CD8-positive, alpha-beta T cell (primary cell): ENCODE measurements at regions of chr6 and their contacts with region 1.

Region 1: DNA sequence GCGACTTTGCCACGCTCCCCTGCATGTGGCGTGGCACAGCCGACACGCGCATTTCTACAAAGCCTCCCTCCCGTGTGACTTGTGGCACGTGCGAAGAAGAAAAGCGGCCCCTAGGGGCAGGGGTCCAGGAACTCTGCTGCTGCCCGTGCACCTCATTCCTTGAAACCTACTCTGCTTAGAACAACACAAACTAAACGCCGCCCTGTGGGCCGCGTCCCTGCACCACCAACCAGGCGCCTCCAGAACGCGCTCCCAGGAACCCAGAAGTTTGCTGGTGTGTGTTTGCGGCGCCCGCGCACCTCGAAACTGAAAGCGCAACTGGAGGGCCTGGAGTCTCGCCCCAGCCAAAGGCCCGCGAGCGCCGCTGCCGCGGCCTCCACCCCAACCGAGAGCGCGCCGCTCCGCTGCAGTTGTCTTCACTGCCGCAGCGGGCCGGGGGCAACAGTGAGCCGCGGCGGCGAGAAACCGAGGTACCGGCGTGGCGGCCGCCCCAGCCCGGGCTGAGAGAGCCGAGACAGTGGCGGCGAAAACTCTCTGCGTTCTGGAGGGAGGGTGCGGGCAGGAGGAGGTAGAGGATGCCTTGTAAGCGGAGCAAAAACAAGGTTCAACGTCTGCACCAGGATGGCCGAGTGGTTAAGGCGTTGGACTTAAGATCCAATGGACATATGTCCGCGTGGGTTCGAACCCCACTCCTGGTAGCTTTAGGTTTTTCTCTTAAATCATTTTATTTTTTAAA is 65.8 kb downstream of the STX11 start:
- DNase-seq: peak; percentile 85 to 97 (median 92)
- ATAC-seq: peak; percentile 85
- H3K4me3 ChIP-seq: peak overlapping the region; percentile 70 to 71
- H3K4me3 Mint-ChIP-seq: peak overlapping the region; percentile 95
- H3K27ac ChIP-seq: peak overlapping the region; percentile 82 to 86
- H3K27ac Mint-ChIP-seq: peak overlapping the region; percentile 100
- H3K4me1 ChIP-seq: peaks cover 27% of the 10 kb centered on the region
- H3K4me1 Mint-ChIP-seq: peaks cover 36% of the 10 kb centered on the region
- H3K27me3 ChIP-seq: no peaks in the 10 kb centered on the region
- H3K27me3 Mint-ChIP-seq: peaks cover 2% of the 10 kb centered on the region
- CTCF ChIP-seq: peak; percentile 64

Region 2: GRCh38 chr6:143450453-143451371 is 765.4 kb before region 1 on chr6 and contains the starts of genes ADAT2 and PEX3:
- CTCF ChIA-PET with region 1: no interaction called
- POLR2A ChIA-PET with region 1: no interaction called
- intact Hi-C with region 1: loop called in 1 of 2 experiments (anchors 5 kb)
- DNase-seq: peak; percentile 82 to 95 (median 92)
- ATAC-seq: peak; percentile 90
- H3K4me3 ChIP-seq: peak within 1 kb of the TSS; percentile 64 to 86
- H3K4me3 Mint-ChIP-seq: peak within 1 kb of the TSS; percentile 100
- H3K27ac ChIP-seq: peak within 1 kb of the TSS; percentile 68 to 74
- H3K27ac Mint-ChIP-seq: peak within 1 kb of the TSS; percentile 96
- H3K4me1 ChIP-seq: peaks cover 21% of the 10 kb centered on the region
- H3K4me1 Mint-ChIP-seq: peaks cover 57% of the 10 kb centered on the region
- H3K27me3 ChIP-seq: no peaks in the 10 kb centered on the region
- H3K27me3 Mint-ChIP-seq: no peaks in the 10 kb centered on the region
- CTCF ChIP-seq: no peak
- total RNA-seq, gene ADAT2: 18.8 to 19.9 TPM
- total RNA-seq, gene PEX3: 10.5 to 11.6 TPM

Region 3: DNA sequence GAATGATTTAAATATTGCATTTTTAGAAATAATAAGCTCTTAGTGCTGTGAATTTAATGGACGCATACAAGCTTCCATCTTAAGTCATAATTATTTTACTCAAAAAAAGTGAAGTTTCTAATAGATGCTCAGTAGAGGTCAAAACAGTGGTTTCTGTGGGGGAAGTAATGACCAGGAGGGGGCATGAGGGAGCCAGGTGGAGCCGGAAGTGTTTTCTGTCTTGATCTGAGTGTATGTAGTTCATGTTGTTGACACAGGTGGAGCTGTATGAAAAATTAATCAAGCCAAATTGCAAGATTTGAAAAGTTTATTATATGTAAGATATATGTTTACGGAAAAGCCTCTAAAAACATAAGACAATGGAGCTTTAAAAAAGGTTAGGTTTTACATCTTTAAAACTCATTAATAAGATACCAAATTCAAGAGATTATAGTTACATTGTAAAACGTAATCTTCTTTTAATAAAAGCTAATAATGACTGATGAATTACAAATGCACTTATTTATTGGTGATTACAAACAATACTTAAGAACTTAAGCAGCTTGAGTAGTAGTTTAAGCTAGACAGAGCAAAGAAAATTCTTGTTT is 276.0 kb before region 1 on chr6:
- CTCF ChIA-PET with region 1: interaction called, 4 read pairs
- POLR2A ChIA-PET with region 1: no interaction called
- intact Hi-C with region 1: loop called (anchors 1 to 2 kb)
- DNase-seq: peak; percentile 7 to 76 (median 51)
- ATAC-seq: peak; percentile 94
- H3K4me3 ChIP-seq: no peak overlapping the region
- H3K4me3 Mint-ChIP-seq: no peak overlapping the region
- H3K27ac ChIP-seq: no peak overlapping the region
- H3K27ac Mint-ChIP-seq: no peak overlapping the region
- H3K4me1 ChIP-seq: peaks cover 5% of the 10 kb centered on the region
- H3K4me1 Mint-ChIP-seq: peaks cover 13% of the 10 kb centered on the region
- H3K27me3 ChIP-seq: no peaks in the 10 kb centered on the region
- H3K27me3 Mint-ChIP-seq: no peaks in the 10 kb centered on the region
- CTCF ChIP-seq: peak; percentile 93

Region 4: DNA sequence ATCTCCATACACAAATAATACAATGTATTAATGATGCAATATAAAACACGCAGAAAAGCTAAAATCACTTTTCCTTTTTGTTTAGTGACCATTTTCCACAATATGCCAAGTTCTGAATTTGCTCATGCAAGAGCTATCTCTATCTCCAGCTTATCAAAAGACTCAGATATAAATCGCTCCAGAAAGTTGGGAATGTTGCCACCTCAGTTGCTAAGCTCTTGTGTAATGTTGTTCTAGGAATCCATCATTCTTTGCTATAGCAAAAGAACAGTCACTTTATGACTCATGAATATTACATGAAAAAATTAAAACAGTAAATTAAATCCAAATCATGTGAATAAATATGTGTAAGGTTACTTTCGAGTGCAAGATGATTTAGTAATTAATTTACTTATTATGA is 216.7 kb before region 1 on chr6:
- CTCF ChIA-PET with region 1: no interaction called
- POLR2A ChIA-PET with region 1: no interaction called
- intact Hi-C with region 1: no loop called
- DNase-seq: no peak
- ATAC-seq: no peak
- H3K4me3 ChIP-seq: no peak overlapping the region
- H3K4me3 Mint-ChIP-seq: no peak overlapping the region
- H3K27ac ChIP-seq: no peak overlapping the region
- H3K27ac Mint-ChIP-seq: no peak overlapping the region
- H3K4me1 ChIP-seq: no peaks in the 10 kb centered on the region
- H3K4me1 Mint-ChIP-seq: no peaks in the 10 kb centered on the region
- H3K27me3 ChIP-seq: no peaks in the 10 kb centered on the region
- H3K27me3 Mint-ChIP-seq: peaks cover 2% of the 10 kb centered on the region
- CTCF ChIP-seq: no peak

Region 5: DNA sequence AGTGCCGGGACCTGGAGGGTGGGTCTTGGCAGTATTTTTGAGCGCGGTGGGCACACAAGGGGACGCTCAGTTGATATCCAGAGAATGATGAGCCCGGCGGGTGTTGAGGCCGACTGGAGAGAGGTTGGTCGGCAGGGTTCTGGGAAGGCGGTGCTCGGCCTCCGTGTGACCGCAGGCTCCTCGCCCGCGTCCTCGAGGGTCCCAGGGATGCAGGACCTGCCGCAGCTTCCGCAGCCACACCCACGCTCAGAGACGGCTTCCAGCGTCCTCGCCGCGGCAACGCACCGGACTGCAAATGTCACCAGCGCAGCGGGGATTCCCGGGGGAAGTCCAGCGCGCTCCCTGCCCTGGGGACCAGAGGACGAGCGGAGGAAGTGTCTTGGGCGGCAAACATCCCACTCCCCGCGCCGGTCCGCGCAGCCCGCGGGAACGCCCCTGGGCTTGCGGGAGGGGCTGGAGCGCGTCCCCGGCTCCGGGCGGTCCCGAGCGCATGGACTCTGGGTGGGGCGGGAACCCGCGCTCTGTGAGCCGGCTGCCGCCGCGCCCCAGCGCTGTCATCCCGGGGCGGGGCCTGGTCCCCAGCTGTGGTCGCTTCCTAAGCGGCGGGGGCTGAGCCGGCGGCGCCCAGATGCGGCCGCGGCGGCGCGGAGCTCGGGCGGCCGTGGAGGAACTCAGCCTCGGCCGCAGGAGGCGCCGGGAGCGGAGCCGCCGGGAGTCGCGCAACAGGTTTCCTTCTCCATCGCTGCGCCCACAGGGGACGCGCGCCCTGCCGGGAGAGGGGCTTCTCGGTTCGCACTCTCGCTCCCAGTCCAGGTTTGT is 66.0 kb before region 1 on chr6 and contains the start of gene STX11:
- CTCF ChIA-PET with region 1: interaction called, 8 read pairs
- POLR2A ChIA-PET with region 1: interaction called, 5 read pairs
- intact Hi-C with region 1: loop called (anchors 1 to 2 kb)
- DNase-seq: peak; percentile 27 to 89 (median 67)
- ATAC-seq: peak; percentile 56
- H3K4me3 ChIP-seq: peak within 1 kb of the TSS; percentile 68 to 71
- H3K4me3 Mint-ChIP-seq: peak within 1 kb of the TSS; percentile 94
- H3K27ac ChIP-seq: peak within 1 kb of the TSS; percentile 66 to 90
- H3K27ac Mint-ChIP-seq: peak within 1 kb of the TSS; percentile 95
- H3K4me1 ChIP-seq: peaks cover 5% of the 10 kb centered on the region
- H3K4me1 Mint-ChIP-seq: peaks cover 19% of the 10 kb centered on the region
- H3K27me3 ChIP-seq: no peaks in the 10 kb centered on the region
- H3K27me3 Mint-ChIP-seq: no peaks in the 10 kb centered on the region
- CTCF ChIP-seq: no peak
- total RNA-seq, gene STX11: 17.7 to 18.9 TPM

Region 6: GRCh38 chr6:144343701-144344428 is 127.8 kb after region 1 on chr6:
- CTCF ChIA-PET with region 1: interaction called, 3 read pairs
- POLR2A ChIA-PET with region 1: interaction called, 3 read pairs
- intact Hi-C with region 1: loop called in 1 of 2 experiments (anchors 1 kb)
- DNase-seq: peak in 6 of 9 experiments; percentile 45 to 89 (median 66)
- ATAC-seq: peak; percentile 73
- H3K4me3 ChIP-seq: peak overlapping the region; percentile 54 to 65
- H3K4me3 Mint-ChIP-seq: peak overlapping the region; percentile 98
- H3K27ac ChIP-seq: peak overlapping the region; percentile 64 to 84
- H3K27ac Mint-ChIP-seq: peak overlapping the region; percentile 100
- H3K4me1 ChIP-seq: peaks cover 49% of the 10 kb centered on the region
- H3K4me1 Mint-ChIP-seq: peaks cover 76% of the 10 kb centered on the region
- H3K27me3 ChIP-seq: no peaks in the 10 kb centered on the region
- H3K27me3 Mint-ChIP-seq: no peaks in the 10 kb centered on the region
- CTCF ChIP-seq: no peak

Region 7: DNA sequence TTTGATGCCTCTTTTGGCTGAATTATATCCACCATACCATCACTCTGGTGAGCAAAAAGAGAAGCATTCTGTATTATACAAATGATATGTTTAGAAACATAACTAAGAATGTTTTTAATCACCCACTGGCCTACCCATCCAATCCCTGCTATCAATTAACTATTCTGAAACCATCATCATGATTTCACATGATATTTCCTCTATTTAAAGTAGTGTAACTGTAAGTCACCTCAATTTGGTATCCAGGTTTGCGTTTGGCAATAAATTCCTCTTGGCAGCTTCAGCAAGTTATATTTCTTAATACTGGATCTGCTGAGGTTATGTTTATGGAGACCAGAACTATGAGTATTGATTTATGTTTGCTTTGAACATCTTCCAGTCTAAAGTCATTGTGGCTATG is 401.1 kb after region 1 on chr6:
- CTCF ChIA-PET with region 1: no interaction called
- POLR2A ChIA-PET with region 1: no interaction called
- intact Hi-C with region 1: no loop called
- DNase-seq: no peak
- ATAC-seq: no peak
- H3K4me3 ChIP-seq: no peak overlapping the region
- H3K4me3 Mint-ChIP-seq: no peak overlapping the region
- H3K27ac ChIP-seq: no peak overlapping the region
- H3K27ac Mint-ChIP-seq: no peak overlapping the region
- H3K4me1 ChIP-seq: no peaks in the 10 kb centered on the region
- H3K4me1 Mint-ChIP-seq: peaks cover 27% of the 10 kb centered on the region
- H3K27me3 ChIP-seq: no peaks in the 10 kb centered on the region
- H3K27me3 Mint-ChIP-seq: no peaks in the 10 kb centered on the region
- CTCF ChIP-seq: no peak

Region 8: DNA sequence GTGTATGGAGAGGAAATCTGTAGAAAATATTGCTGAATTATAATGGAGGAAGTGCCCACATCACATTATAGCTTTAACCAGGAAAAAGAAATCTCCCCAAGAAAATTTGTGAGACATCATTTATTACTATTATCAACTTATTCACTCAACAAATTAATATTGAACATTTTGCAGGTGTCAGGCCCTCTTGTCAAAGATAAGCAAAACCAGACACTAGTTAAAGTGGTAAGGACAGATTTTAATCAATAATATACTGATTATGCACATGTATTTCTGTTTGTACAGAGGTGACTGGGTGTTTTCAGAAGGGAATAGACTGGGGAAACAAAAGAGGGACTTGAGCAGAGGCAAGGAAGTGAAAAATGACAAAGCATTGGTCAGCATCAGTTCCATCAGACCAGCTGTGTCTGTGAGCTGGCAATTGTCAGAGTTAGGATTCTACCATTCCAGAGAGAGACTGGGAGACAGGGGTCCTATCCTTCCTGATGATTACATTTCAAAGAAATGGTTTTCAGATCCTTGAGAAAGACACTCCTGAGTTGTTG is 588.2 kb after region 1 on chr6:
- CTCF ChIA-PET with region 1: no interaction called
- POLR2A ChIA-PET with region 1: no interaction called
- intact Hi-C with region 1: no loop called
- DNase-seq: no peak
- ATAC-seq: no peak
- H3K4me3 ChIP-seq: no peak overlapping the region
- H3K4me3 Mint-ChIP-seq: no peak overlapping the region
- H3K27ac ChIP-seq: no peak overlapping the region
- H3K27ac Mint-ChIP-seq: no peak overlapping the region
- H3K4me1 ChIP-seq: no peaks in the 10 kb centered on the region
- H3K4me1 Mint-ChIP-seq: peaks cover 3% of the 10 kb centered on the region
- H3K27me3 ChIP-seq: no peaks in the 10 kb centered on the region
- H3K27me3 Mint-ChIP-seq: no peaks in the 10 kb centered on the region
- CTCF ChIP-seq: no peak

Region 9: GRCh38 chr6:145814501-145815308 is 1598.6 kb after region 1 on chr6 and contains the start of gene FBXO30:
- CTCF ChIA-PET with region 1: no interaction called
- POLR2A ChIA-PET with region 1: no interaction called
- intact Hi-C with region 1: loop called in 1 of 2 experiments (anchors 10 kb)
- DNase-seq: peak; percentile 73 to 94 (median 84)
- ATAC-seq: peak; percentile 89
- H3K4me3 ChIP-seq: peak within 1 kb of the TSS; percentile 80 to 83
- H3K4me3 Mint-ChIP-seq: peak within 1 kb of the TSS; percentile 96
- H3K27ac ChIP-seq: peak within 1 kb of the TSS; percentile 58 to 89
- H3K27ac Mint-ChIP-seq: peak within 1 kb of the TSS; percentile 96
- H3K4me1 ChIP-seq: peaks cover 32% of the 10 kb centered on the region
- H3K4me1 Mint-ChIP-seq: peaks cover 45% of the 10 kb centered on the region
- H3K27me3 ChIP-seq: no peaks in the 10 kb centered on the region
- H3K27me3 Mint-ChIP-seq: no peaks in the 10 kb centered on the region
- CTCF ChIP-seq: peak; percentile 33
- total RNA-seq, gene FBXO30: 1.5 to 1.7 TPM